CD4-positive, alpha-beta T cell (primary cell): ENCODE measurements at regions of chr14 and their contacts with region 1.

Region 1: GRCh38 chr14:33839193-33840076 is 111.4 kb downstream of the EGLN3 start:
- DNase-seq: peak; percentile 19 to 72 (median 42)
- ATAC-seq: peak; percentile 43
- H3K4me3 ChIP-seq: no peak overlapping the region
- H3K4me3 Mint-ChIP-seq: no peak overlapping the region
- H3K27ac ChIP-seq: no peak overlapping the region
- H3K27ac Mint-ChIP-seq: no peak overlapping the region
- H3K4me1 ChIP-seq: peaks cover 5% of the 10 kb centered on the region
- H3K4me1 Mint-ChIP-seq: peaks cover 5% of the 10 kb centered on the region
- H3K27me3 ChIP-seq: no peaks in the 10 kb centered on the region
- H3K27me3 Mint-ChIP-seq: no peaks in the 10 kb centered on the region
- CTCF ChIP-seq: peak; percentile 71

Region 2: DNA sequence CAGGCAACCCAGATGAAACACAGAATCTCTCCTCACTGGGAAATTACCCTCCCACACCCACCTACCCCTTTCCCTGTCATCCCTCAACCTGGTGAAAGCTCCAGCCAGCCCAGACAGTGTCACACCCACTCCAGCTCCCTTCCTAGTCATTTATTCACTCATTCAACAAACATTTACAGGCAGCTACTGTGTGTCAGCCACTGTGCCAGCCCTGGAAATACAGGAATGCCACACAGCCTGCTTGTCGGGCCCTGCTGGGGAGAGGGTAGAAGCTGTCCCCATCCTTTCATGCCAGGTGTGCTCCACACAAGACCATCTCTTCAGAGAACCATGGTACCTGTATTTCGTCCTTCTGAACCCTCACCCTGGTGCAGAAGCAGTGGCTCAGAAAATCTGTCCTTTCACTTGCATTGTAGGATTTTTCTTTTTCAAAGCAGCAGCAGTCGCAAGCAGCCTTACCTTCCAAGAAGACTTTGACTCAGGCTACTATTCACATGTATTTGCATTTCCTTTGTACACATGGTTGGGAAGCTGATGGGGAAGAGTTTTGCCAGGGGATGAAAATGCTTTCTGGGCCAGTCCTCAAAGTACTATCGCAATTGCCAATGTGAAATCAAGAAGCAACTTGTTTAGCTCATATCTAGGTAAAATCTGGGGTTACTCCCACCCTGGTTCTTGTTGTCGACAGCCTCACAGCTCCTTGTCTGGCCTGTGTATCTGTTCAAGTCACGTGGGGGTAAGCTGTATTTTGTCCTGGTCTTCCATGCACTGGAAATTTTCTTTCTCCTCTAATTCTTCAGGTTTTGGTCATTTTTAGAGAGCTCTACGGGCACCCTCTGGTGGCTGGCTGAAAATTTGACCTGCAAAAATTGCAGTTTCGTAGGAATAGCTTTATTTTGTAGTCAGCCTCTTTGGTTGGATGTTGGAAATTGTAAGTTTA is 258.9 kb after region 1 on chr14:
- CTCF ChIA-PET with region 1: no interaction called
- POLR2A ChIA-PET with region 1: interaction called, 4 read pairs
- intact Hi-C with region 1: loop called (anchors 1 to 2 kb)
- DNase-seq: peak in 5 of 14 experiments; percentile 3 to 39 (median 33)
- ATAC-seq: no peak
- H3K4me3 ChIP-seq: no peak overlapping the region
- H3K4me3 Mint-ChIP-seq: no peak overlapping the region
- H3K27ac ChIP-seq: no peak overlapping the region
- H3K27ac Mint-ChIP-seq: no peak overlapping the region
- H3K4me1 ChIP-seq: peaks cover 6% of the 10 kb centered on the region
- H3K4me1 Mint-ChIP-seq: no peaks in the 10 kb centered on the region
- H3K27me3 ChIP-seq: no peaks in the 10 kb centered on the region
- H3K27me3 Mint-ChIP-seq: no peaks in the 10 kb centered on the region
- CTCF ChIP-seq: no peak

Region 3: GRCh38 chr14:34227834-34228649 is 388.6 kb after region 1 on chr14:
- CTCF ChIA-PET with region 1: interaction called, 7 read pairs
- POLR2A ChIA-PET with region 1: no interaction called
- intact Hi-C with region 1: loop called (anchors 1 to 2 kb)
- DNase-seq: peak; percentile 19 to 67 (median 42)
- ATAC-seq: peak; percentile 49
- H3K4me3 ChIP-seq: no peak overlapping the region
- H3K4me3 Mint-ChIP-seq: no peak overlapping the region
- H3K27ac ChIP-seq: no peak overlapping the region
- H3K27ac Mint-ChIP-seq: no peak overlapping the region
- H3K4me1 ChIP-seq: peaks cover 3% of the 10 kb centered on the region
- H3K4me1 Mint-ChIP-seq: no peaks in the 10 kb centered on the region
- H3K27me3 ChIP-seq: no peaks in the 10 kb centered on the region
- H3K27me3 Mint-ChIP-seq: no peaks in the 10 kb centered on the region
- CTCF ChIP-seq: peak; percentile 65

Region 4: DNA sequence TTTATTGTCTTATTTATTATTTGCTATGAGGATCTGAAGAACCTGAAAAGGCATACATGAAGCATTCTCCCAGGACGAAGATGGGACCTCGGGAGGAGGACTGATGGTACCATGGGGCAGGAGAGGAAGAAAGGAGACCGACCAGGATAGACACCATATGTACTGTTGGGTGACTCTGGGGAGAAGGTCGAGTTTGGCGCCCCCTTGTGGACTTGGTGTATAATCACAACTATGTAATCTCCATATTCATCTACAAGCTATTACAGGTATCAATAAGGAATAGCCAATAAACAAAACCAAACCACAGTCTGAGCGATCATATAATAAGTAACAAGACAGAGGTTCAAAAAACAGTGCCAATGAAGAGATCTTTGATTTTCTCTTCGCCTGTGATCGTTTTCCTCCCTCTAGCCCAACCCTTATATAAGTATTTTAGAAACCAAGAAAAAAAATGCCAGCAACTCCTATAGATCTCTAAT is 483.5 kb after region 1 on chr14:
- CTCF ChIA-PET with region 1: no interaction called
- POLR2A ChIA-PET with region 1: no interaction called
- intact Hi-C with region 1: loop called (anchors 5 kb)
- DNase-seq: peak; percentile 42 to 82 (median 64)
- ATAC-seq: peak; percentile 73
- H3K4me3 ChIP-seq: no peak overlapping the region
- H3K4me3 Mint-ChIP-seq: no peak overlapping the region
- H3K27ac ChIP-seq: no peak overlapping the region
- H3K27ac Mint-ChIP-seq: no peak overlapping the region
- H3K4me1 ChIP-seq: peaks cover 3% of the 10 kb centered on the region
- H3K4me1 Mint-ChIP-seq: no peaks in the 10 kb centered on the region
- H3K27me3 ChIP-seq: no peaks in the 10 kb centered on the region
- H3K27me3 Mint-ChIP-seq: peaks cover 6% of the 10 kb centered on the region
- CTCF ChIP-seq: peak; percentile 87